ENCODE measurements at regions of chr17 and their contacts with region 1.

Region 1: GRCh38 chr17:76467366-76467765 is at the start of gene AANAT:
- DNase-seq: no peak
- H3K4me3 ChIP-seq: no peak within 1 kb of the TSS
- H3K27ac ChIP-seq: peak within 1 kb of the TSS in 16 of 59 donors; percentile 6 to 72 (median 36)
- H3K27me3 ChIP-seq: no peaks in the 10 kb centered on the region
- CTCF ChIP-seq: no peak
- total RNA-seq, gene AANAT: 0.22 to 2.0 (median 0.62) TPM in 42 of 120 experiments, not detected in the others

Region 2: DNA sequence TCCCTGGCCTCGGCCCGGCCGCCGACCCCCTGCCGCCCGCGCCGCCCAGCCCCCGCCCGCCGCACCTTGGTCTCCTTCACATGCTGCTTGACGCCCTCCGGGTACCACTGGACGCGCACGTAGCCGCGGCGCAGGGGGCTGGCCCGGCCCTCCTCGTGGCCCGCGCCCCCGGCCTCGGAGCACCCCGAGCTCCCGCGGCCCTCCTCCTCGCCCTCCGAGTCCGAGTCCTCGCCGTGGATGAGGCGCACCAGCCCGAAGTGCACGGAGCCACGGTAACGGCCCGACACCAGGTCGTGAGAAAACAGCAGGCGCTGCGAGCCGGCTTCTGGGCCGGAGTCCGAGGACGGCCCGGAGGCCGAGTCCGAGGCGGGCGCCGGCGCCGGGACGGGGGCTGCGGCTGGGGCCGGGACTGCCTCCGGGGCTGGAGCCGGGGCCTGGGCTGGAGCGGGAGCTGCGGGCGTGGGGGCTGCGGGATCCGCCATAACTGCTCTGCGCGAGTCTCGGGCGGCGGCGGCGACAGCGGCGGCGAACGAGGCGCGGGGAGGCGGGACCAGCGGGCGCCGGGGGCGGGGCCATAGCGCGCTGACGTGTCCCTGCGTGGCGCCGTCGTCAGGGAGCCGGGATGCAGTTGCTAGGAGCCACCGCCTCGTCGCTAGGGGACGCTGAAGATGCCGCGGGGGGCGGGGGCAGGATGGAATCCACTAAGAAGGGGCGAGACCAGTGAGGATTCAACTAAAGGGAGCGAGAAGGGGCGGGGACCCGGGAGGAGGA is 14.5 kb before region 1 on chr17 and contains the start of gene UBE2O:
- intact Hi-C with region 1: no loop called
- DNase-seq: peak; percentile 70 to 96 (median 88)
- H3K4me3 ChIP-seq: peak within 1 kb of the TSS; percentile 57 to 100 (median 89)
- H3K27ac ChIP-seq: peak within 1 kb of the TSS in 49 of 59 donors; percentile 20 to 88 (median 68)
- H3K27me3 ChIP-seq: no peaks in the 10 kb centered on the region
- CTCF ChIP-seq: peak in 53 of 56 donors; percentile 30 to 68 (median 55)
- total RNA-seq, gene UBE2O: 42.7 to 122 (median 85.2) TPM

Region 3: DNA sequence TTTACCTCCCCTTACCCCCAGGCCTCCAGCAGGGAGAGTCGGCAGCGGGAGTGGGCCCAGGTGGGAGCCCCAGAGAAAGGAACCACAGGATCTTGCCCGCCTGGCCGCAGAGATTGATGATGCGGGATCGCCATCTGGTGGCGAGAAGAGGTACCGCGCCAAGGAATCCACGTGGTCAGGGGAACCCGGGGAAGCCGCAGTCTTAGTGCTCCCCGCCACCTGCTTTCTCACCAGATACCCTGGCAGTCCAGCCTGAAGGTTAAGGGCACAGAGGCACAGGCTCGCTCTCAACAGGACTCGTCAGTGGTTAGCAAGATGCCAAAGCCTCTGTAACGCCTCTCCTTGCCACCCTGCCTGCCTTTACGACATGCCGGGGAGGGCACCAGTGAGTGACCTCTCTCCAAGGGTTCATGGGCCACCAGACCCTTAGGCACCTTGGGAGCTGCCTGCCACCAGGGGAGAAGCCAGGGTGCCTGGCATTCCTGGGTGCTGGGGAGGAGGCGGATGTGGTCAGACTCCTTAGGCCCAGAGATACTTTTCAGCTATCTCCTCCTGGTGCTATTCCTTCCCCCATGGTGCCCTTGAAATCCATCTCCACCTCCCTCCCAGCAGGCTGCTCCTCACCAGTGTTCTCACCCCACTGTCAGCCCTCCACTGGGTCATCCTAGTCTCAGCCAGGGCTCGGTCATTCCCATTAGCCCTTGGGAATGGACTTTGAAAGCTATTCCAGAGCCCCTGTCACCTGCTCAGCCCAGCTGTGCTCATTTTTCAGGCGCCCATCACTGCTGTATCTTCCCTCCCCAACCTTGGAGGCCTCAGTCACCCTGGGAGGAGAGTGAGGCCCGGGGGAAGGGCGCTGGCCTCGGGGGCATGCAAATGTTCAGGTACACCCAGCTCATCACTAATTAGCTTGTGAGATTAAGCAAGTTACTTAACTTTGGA is 39.3 kb after region 1 on chr17:
- intact Hi-C with region 1: loop called (anchors 1 kb)
- DNase-seq: peak; percentile 74 to 92 (median 84)
- H3K4me3 ChIP-seq: peak overlapping the region in 1 of 59 donors; percentile 24
- H3K27ac ChIP-seq: no peak overlapping the region
- H3K27me3 ChIP-seq: peaks cover 0 to 3% (median 0%) of the 10 kb centered on the region in 45 donors
- CTCF ChIP-seq: peak; percentile 81 to 99 (median 98)

Measured in dorsolateral prefrontal cortex (tissue), 120 donors.